ENCODE measurements at regions of chr6 and their contacts with region 1.

Region 1: GRCh38 chr6:14108571-14109410 is 8.8 kb upstream of the CD83 start:
- DNase-seq: no peak
- H3K4me3 Mint-ChIP-seq: peak overlapping the region; percentile 70
- H3K27ac Mint-ChIP-seq: peak overlapping the region; percentile 77
- H3K4me1 Mint-ChIP-seq: peaks cover 42% of the 10 kb centered on the region
- H3K27me3 Mint-ChIP-seq: peaks cover 12% of the 10 kb centered on the region

Region 2: GRCh38 chr6:13574149-13574570 is 534.6 kb before region 1 on chr6:
- intact Hi-C with region 1: no loop called
- DNase-seq: peak; percentile 90
- H3K4me3 Mint-ChIP-seq: peak overlapping the region; percentile 98
- H3K27ac Mint-ChIP-seq: peak overlapping the region; percentile 99
- H3K4me1 Mint-ChIP-seq: peaks cover 9% of the 10 kb centered on the region
- H3K27me3 Mint-ChIP-seq: peaks cover 4% of the 10 kb centered on the region

Region 3: GRCh38 chr6:14075095-14075503 is 33.7 kb before region 1 on chr6:
- intact Hi-C with region 1: loop called (anchors 1 kb)
- DNase-seq: no peak
- H3K4me3 Mint-ChIP-seq: peak overlapping the region; percentile 82
- H3K27ac Mint-ChIP-seq: peak overlapping the region; percentile 95
- H3K4me1 Mint-ChIP-seq: peaks cover 58% of the 10 kb centered on the region
- H3K27me3 Mint-ChIP-seq: no peaks in the 10 kb centered on the region

Region 4: GRCh38 chr6:14095437-14095836 is 13.4 kb before region 1 on chr6:
- intact Hi-C with region 1: loop called (anchors 1 kb)
- DNase-seq: no peak
- H3K4me3 Mint-ChIP-seq: no peak overlapping the region
- H3K27ac Mint-ChIP-seq: peak overlapping the region; percentile 78
- H3K4me1 Mint-ChIP-seq: peaks cover 43% of the 10 kb centered on the region
- H3K27me3 Mint-ChIP-seq: peaks cover 5% of the 10 kb centered on the region

Measured in activated T-helper 2 cell treated with anti-CD3 and anti-CD28 coated beads, Interferon-gamma antibody, Interleukin-2, Interleukin-4, amounts not matched to agents 10 μg/mL and 5 μg/mL and 100 μg/mL, durations not matched to agents 14 hours and 24 hours and 36 hours (primary cell).